ENCODE measurements at regions of chr1 and their contacts with region 1.

Region 1: DNA sequence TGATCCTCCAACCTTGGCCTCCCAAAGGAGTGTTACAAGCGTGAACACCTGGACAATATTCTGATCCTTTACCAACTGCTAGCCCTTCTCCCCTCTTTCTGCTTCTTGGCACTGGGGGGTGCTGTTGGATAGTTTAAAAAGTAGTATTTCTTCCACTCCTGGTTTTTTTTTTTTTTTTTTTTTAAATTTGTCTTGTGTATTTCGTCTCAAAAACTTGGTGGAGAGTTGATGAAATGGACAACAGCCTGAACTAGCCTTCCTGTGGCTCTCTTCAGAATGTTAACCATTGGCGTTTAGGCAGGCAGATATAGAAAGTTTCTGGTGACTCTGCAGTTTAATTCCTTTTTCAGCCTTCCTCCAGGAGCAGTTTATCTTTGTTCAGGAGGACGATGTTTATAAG is 69.7 kb upstream of the USP24 start:
- DNase-seq: peak; percentile 39 to 68 (median 64)
- H3K4me3 ChIP-seq: no peak overlapping the region
- H3K27ac ChIP-seq: no peak overlapping the region
- H3K4me1 ChIP-seq: peaks cover 0 to 11% (median 5%) of the 10 kb centered on the region in 4 experiments
- H3K27me3 ChIP-seq: peaks cover 0 to 3% (median 0%) of the 10 kb centered on the region in 5 experiments

Region 2: GRCh38 chr1:54980528-54981241 is 304.2 kb before region 1 on chr1 and contains the start of gene TMEM61:
- CTCF ChIA-PET with region 1: no interaction called
- POLR2A ChIA-PET with region 1: no interaction called
- DNase-seq: no peak
- H3K4me3 ChIP-seq: peak within 1 kb of the TSS in 5 of 7 experiments; percentile 15 to 43 (median 35)
- H3K27ac ChIP-seq: no peak within 1 kb of the TSS
- H3K4me1 ChIP-seq: peaks cover 0 to 9% (median 5%) of the 10 kb centered on the region in 4 experiments
- H3K27me3 ChIP-seq: peaks cover 8 to 64% (median 25%) of the 10 kb centered on the region in 5 experiments

Region 3: GRCh38 chr1:55140546-55140983 is 144.3 kb before region 1 on chr1:
- CTCF ChIA-PET with region 1: interaction called, 68 read pairs
- POLR2A ChIA-PET with region 1: no interaction called
- DNase-seq: peak; percentile 84 to 90 (median 89)
- H3K4me3 ChIP-seq: no peak overlapping the region
- H3K27ac ChIP-seq: no peak overlapping the region
- H3K4me1 ChIP-seq: peaks cover 0 to 13% (median 6%) of the 10 kb centered on the region in 4 experiments
- H3K27me3 ChIP-seq: no peaks in the 10 kb centered on the region

Region 4: DNA sequence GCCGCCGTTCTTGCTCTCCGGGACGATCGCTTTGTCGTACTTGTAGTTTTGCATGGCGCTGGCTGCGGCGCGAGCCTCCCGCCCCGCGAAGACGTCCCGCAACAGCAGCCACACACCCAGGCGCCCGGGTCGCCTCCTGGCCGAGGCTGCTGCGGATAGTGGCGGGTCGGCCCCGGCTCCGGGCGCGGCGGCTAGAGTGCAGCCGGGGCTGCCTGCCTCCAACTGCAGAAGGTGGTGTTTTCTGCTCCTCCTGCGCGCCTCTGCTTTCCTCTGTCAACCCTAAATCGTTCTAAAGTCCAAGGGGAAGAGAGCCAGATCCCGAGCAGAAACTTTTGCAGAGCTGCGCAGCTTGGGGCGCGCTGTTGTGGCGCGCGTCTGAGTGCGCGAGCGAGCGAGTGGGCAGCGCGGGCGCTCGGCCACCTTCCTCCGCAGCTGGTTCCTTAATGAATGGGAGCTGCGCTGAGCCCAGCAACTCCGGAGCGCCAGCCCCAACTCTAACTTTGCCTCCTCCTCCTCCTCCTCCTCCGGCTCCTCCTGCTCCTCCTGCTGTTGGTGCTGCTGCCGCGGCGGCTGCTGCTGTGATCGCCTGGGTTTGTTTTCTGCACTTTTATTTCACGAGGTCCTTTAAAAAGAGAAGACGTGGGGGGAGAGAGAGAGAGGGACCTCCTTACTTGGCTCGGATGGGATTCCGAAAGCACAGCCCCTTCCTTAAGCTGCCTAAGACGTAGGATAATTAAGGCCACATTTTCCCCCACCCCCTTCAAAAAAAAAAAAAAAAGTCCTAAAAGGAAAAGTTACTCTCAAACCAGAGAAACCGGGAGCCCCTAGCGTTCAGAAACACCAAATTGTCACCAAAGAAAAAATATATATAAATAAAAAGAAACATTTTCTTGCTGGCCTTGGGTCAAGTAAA is 1294.4 kb after region 1 on chr1 and contains the start of gene PLPP3:
- CTCF ChIA-PET with region 1: interaction called, 53 read pairs
- POLR2A ChIA-PET with region 1: no interaction called
- DNase-seq: peak; percentile 71 to 86 (median 79)
- H3K4me3 ChIP-seq: peak within 1 kb of the TSS; percentile 51 to 93 (median 77)
- H3K27ac ChIP-seq: no peak within 1 kb of the TSS
- H3K4me1 ChIP-seq: peaks cover 2 to 23% (median 12%) of the 10 kb centered on the region in 4 experiments
- H3K27me3 ChIP-seq: peaks cover 0 to 2% (median 0%) of the 10 kb centered on the region in 5 experiments

Region 5: DNA sequence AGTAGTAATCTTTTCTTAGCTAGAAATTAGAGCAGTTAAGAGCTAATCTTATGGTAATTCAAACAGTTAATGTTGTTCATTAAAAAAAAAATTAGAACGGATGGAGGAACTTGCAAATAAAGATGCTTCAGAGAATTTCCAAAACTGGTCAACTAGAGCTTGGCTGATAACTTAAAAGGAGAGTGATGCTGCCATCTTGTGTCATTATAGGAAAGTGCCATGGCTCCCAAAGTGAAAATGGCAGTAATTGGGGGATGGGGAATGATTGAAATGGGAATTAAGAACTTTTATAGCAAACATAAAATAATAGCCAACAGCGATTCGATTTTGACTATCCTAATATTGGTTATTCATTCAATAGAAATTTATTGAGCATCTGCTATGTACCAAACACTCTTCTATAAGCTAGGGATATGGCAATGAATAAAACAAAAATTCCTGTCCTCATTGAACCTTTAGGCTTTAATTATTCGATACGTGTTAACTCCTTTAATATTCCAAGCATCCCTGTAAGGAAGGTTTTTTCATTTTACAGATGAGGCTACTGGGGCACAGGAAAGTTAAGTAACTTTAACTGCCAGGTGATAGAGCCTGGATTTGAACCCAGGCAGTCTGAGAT is 1300.2 kb after region 1 on chr1:
- CTCF ChIA-PET with region 1: interaction called, 53 read pairs
- POLR2A ChIA-PET with region 1: interaction called, 3 read pairs
- DNase-seq: peak; percentile 61 to 74 (median 68)
- H3K4me3 ChIP-seq: no peak overlapping the region
- H3K27ac ChIP-seq: no peak overlapping the region
- H3K4me1 ChIP-seq: peaks cover 0 to 3% (median 0%) of the 10 kb centered on the region in 4 experiments
- H3K27me3 ChIP-seq: no peaks in the 10 kb centered on the region

Region 6: GRCh38 chr1:56709269-56709880 is 1424.5 kb after region 1 on chr1:
- CTCF ChIA-PET with region 1: interaction called, 19 read pairs
- POLR2A ChIA-PET with region 1: no interaction called
- DNase-seq: peak; percentile 53 to 71 (median 64)
- H3K4me3 ChIP-seq: no peak overlapping the region
- H3K27ac ChIP-seq: no peak overlapping the region
- H3K4me1 ChIP-seq: no peaks in the 10 kb centered on the region
- H3K27me3 ChIP-seq: peaks cover 0 to 2% (median 0%) of the 10 kb centered on the region in 5 experiments

Measured in common myeloid progenitor, CD34-positive (primary cell).